HEK293 (cell line): ENCODE measurements at regions of chr1 and their contacts with region 1.

Region 1: DNA sequence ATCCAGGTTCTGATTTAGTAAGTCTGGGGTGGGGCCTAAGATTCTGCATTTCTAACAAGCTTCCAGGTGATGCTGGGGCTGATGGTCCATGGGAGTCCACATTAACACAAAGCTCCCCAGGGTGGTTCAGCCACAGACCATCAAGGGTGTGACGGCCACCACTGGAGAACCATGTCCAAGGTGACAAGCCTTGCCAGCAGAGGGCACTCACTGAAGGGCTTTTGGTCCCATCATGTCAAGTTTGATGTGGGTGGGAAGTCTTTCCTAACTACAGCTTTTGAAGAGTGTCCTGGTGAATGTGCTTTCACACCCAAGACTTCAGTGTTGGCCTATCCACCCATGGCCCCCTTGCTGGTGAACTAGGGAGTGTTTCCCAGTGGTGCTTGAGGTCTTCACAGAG is 67.1 kb downstream of the UBE2T start:
- H3K4me3 ChIP-seq: no peak overlapping the region
- H3K27ac ChIP-seq: no peak overlapping the region
- H3K4me1 ChIP-seq: no peaks in the 10 kb centered on the region
- CTCF ChIP-seq: peak; percentile 32; the same call in 1 of the 2 replicates

Region 2: DNA sequence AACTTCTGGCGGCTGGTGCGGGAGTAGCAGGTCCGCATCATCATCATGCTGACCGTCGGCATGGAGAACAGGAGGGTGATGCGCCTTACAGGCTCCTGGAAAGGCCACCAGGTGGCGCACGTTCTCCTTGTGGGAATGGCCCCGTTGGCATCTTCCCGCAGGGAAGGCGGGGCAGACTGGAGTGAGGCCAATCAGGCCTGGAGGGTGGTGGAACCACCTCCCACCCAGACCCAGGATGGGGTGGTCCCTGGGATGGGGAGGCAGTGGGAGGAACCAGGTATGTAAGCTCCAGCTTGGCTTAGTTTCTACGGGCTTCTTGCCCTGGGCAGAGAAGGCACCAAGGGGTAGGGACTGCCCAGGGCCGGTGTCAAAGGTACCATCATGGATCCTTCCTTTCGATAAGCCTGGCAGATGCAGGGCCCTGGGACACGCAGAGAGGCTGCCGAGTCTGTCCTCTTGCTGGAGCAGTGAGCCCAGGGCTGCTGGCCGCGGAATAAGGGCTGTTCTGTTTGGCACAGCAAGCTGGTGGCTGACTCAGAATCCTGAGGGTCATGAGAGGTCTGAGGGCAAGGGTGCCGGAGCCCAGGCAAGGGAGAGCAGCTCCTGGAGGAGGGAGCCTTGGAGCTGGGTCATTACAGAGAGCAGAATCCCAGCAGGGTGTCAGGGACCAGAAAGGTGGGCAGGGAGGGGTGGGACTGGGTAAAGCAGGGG is 89.7 kb before region 1 on chr1:
- CTCF ChIA-PET with region 1: interaction called, 11 read pairs
- POLR2A ChIA-PET with region 1: no interaction called
- H3K4me3 ChIP-seq: no peak overlapping the region
- H3K27ac ChIP-seq: no peak overlapping the region
- H3K4me1 ChIP-seq: no peaks in the 10 kb centered on the region
- CTCF ChIP-seq: peak; percentile 88

Region 3: DNA sequence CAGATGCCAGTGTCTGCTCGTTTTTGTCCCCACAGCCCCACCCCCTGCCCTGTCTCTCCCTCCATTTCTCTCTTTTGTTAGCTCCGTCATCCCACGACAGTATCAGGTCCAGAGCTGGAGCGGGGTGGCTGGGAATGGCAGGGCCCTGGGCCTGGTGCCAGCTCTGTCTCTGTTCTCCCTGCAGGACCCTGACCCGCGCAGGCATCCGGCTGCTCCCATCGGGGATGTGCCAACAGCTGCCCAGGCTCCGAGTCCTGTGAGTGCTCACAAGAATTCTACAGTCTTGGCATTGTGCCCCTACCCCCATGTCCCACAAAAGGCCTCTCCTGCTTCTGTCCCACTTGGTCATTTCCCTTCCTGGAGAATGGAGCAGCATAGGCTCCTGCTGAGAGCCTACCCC is 29.8 kb after region 1 on chr1:
- CTCF ChIA-PET with region 1: interaction called, 14 read pairs
- POLR2A ChIA-PET with region 1: no interaction called
- H3K4me3 ChIP-seq: no peak overlapping the region
- H3K27ac ChIP-seq: no peak overlapping the region
- H3K4me1 ChIP-seq: no peaks in the 10 kb centered on the region
- CTCF ChIP-seq: no peak